H1 (cell line): ENCODE measurements at regions of chr15 and their contacts with region 1.

Region 1: GRCh38 chr15:74615508-74616365 is at the start of gene CLK3:
- DNase-seq: peak; percentile 79 to 98
- H3K4me3 ChIP-seq: peak within 1 kb of the TSS; percentile 80 to 96 (median 84)
- H3K27ac ChIP-seq: peak within 1 kb of the TSS; percentile 68
- H3K4me1 ChIP-seq: peaks cover 0 to 5% (median 2%) of the 10 kb centered on the region in 4 experiments; a peak in 5 of 7 replicates
- H3K27me3 ChIP-seq: peaks cover 0 to 15% (median 11%) of the 10 kb centered on the region in 4 experiments; a peak in 4 of 7 replicates
- CTCF ChIP-seq: peak in 1 of 3 experiments; percentile 11; a peak in 1 of 4 replicates
- EP300 ChIP-seq: 0 out of 3 replicates have a peak, but pooled peaks of 1 of the 2 experiments have one; percentile 17
- POLR2A ChIP-seq: peak in 1 of 2 experiments; percentile 85; a peak in 2 of 3 replicates
- RAD21 ChIP-seq: peak in 1 of 2 experiments; percentile 14; a peak in 1 of 4 replicates
- total RNA-seq, gene CLK3: 42.4 and 43.5 TPM in 2 replicates

Region 2: DNA sequence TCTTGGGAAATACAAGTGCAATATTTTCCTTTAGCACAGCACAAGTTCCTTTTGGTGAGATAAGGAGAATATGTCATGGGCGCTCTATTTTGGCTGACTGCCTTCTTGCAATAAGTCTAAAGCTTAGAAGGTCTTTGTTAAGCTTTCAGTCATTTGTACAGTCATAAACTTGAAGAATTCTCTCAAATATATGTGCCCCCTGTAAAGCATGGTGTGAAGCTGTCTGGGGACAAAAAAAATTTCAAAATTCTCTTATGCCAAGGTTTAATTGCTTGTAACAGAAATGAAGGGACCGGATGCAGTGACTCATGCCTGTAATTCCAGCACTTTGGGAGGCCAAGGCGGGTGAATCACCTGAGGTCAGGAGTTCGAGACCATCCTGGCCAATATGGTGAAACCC is 96.4 kb before region 1 on chr15:
- CTCF ChIA-PET with region 1: no interaction called
- POLR2A ChIA-PET with region 1: no interaction called
- DNase-seq: no peak
- H3K4me3 ChIP-seq: no peak overlapping the region
- H3K27ac ChIP-seq: no peak overlapping the region
- H3K4me1 ChIP-seq: no peaks in the 10 kb centered on the region; a peak in 1 of 7 replicates
- H3K27me3 ChIP-seq: no peaks in the 10 kb centered on the region
- CTCF ChIP-seq: no peak
- EP300 ChIP-seq: no peak
- POLR2A ChIP-seq: no peak
- RAD21 ChIP-seq: no peak

Region 3: GRCh38 chr15:74540761-74541493 is 74.8 kb before region 1 on chr15 and contains the start of gene ARID3B:
- CTCF ChIA-PET with region 1: interaction called, 4 read pairs
- POLR2A ChIA-PET with region 1: interaction called, 12 read pairs
- DNase-seq: peak; percentile 88 to 96
- H3K4me3 ChIP-seq: peak within 1 kb of the TSS; percentile 92 to 100 (median 95)
- H3K27ac ChIP-seq: peak within 1 kb of the TSS; percentile 65
- H3K4me1 ChIP-seq: peaks cover 2 to 9% (median 4%) of the 10 kb centered on the region in 4 experiments; a peak in 5 of 7 replicates
- H3K27me3 ChIP-seq: no peaks in the 10 kb centered on the region
- CTCF ChIP-seq: no peak
- EP300 ChIP-seq: no peak
- POLR2A ChIP-seq: peak; percentile 75 to 93
- RAD21 ChIP-seq: no peak
- total RNA-seq, gene ARID3B: 115 and 118 TPM in 2 replicates

Region 4: GRCh38 chr15:74598126-74598842 is 17.5 kb before region 1 on chr15:
- CTCF ChIA-PET with region 1: interaction called, 7 read pairs
- POLR2A ChIA-PET with region 1: interaction called, 122 read pairs
- DNase-seq: peak; percentile 62 to 96
- H3K4me3 ChIP-seq: peak overlapping the region in 3 of 4 experiments; percentile 3 to 48 (median 34); a peak in 4 of 8 replicates
- H3K27ac ChIP-seq: no peak overlapping the region
- H3K4me1 ChIP-seq: peaks cover 0 to 3% (median 3%) of the 10 kb centered on the region in 4 experiments; a peak in 5 of 7 replicates
- H3K27me3 ChIP-seq: no peaks in the 10 kb centered on the region; a peak in 1 of 7 replicates
- CTCF ChIP-seq: no peak
- EP300 ChIP-seq: no peak
- POLR2A ChIP-seq: peak in 1 of 2 experiments; percentile 42; a peak in 1 of 3 replicates
- RAD21 ChIP-seq: no peak

Region 5: DNA sequence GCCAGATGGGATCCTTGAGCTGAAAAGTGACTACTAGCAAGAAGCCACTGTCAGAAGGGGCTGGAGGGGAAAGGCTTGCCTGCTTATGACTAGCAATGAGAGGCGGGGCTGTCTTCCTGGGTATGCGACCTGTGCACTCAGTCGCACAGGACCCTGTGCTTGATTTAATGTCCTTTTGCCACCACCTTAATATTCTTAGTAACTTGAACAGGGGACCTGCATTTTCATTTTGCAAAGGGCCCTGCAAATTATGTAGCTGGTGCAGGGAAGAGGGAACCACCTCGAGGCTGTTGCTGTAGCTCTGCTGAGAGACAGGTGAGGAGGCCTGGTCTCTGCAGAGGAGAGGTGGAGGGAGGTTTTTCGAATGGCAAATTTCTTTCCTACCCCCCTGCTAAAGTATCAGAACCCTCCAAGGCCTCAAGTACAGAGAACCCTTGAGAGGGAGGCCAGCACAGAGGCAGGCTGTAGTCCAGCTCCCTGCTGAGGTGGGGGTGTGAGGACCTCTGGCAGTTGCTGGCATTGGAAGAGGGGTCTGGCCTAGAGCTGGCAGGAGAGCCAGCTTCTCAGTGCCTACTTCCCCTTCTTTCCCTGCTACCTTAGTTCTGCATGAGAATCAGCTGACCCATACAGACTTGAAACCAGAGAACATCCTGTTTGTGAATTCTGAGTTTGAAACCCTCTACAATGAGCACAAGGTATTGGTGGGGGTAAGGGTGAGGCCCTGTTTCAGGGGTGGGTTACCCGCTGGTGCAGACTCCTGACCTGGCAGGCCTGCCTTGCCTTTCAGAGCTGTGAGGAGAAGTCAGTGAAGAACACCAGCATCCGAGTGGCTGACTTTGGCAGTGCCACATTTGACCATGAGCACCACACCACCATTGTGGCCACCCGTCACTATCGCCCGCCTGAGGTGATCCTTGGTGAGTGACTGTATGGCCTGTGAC is 11.3 kb after region 1 on chr15:
- CTCF ChIA-PET with region 1: interaction called, 538 read pairs
- POLR2A ChIA-PET with region 1: interaction called, 38 read pairs
- DNase-seq: no peak
- H3K4me3 ChIP-seq: no peak overlapping the region
- H3K27ac ChIP-seq: no peak overlapping the region
- H3K4me1 ChIP-seq: no peaks in the 10 kb centered on the region
- H3K27me3 ChIP-seq: no peaks in the 10 kb centered on the region
- CTCF ChIP-seq: no peak
- EP300 ChIP-seq: no peak
- POLR2A ChIP-seq: no peak
- RAD21 ChIP-seq: no peak